GM23248 (cell line): ENCODE measurements at regions of chr19 and their contacts with region 1.

Region 1: GRCh38 chr19:38229585-38230073 is 5.6 kb upstream of the DPF1 start:
- DNase-seq: peak; percentile 87
- H3K4me3 ChIP-seq: peak overlapping the region; percentile 65
- H3K27ac ChIP-seq: no peak overlapping the region
- H3K4me1 ChIP-seq: no peaks in the 10 kb centered on the region
- H3K27me3 ChIP-seq: no peaks in the 10 kb centered on the region

Region 2: DNA sequence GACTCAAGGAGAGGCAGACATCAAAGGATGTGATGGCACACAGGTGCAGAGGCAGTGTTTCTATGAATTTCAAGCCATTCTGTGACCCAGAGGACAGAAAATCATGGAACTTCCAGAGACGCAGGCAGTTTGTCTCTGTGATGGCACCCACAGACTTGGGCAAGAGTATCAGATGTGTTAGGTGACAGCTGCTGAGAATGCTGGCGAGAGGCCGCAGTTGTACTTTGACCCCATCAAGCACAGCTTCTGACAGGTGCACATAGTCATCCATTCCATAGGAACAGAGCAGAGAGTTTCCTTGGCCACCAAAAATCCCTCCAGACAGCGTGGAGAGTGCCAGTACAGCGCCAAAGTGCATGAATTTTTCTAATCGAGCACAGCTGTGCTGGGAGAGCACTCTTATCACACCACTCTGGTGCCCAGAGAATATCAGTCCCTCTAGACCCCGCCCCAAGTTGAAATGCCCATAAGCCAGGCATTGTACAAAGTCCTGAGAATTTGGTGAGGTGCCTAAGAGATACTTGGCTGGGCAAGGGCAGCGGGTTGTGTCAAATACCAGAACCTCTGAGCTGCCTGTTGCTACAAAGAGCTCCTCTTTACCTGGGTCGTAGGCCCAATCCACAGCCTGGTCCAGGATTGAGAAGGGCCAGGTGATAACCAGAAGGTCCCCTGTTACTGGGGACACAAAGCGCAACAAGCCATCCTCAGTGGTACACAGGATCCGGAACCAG is 335.6 kb before region 1 on chr19:
- in situ Hi-C with region 1: loop called (anchors 10 kb)
- DNase-seq: no peak
- H3K4me3 ChIP-seq: no peak overlapping the region
- H3K27ac ChIP-seq: no peak overlapping the region
- H3K4me1 ChIP-seq: no peaks in the 10 kb centered on the region
- H3K27me3 ChIP-seq: peaks cover 25% of the 10 kb centered on the region